ENCODE measurements at regions of chr2 and their contacts with region 1.

Region 1: DNA sequence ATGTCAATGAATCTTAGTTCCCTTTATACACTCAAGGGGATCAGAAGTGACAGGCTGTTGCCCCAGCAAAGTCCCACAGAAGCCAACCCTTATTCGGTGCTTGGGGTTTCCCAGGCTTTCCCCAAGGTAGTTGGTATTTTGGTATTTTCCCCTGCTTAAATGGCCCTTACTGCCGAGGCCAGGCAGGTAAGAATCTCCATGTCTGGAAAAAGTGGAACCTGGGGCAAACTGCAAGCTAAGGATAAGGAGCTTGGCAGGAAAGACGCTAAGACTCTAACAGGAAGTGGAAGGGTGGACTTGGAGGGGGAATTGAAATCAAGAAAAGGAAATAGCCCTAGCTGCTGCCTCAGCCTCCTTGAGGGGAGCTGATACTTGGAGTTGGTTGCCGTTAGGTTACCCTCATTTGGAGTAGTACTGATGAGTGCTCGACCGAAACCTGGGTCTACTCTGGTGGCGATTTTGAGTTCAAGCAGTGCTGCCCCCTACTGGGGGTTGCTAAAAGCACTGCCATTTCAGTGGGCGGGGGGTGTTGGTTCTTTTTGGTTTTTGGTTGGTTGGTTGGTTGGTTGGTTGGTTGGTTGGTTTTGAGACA is 3.3 kb upstream of the GPBAR1 start:
- DNase-seq: peak; percentile 64 to 73 (median 68)
- H3K4me3 ChIP-seq: no peak overlapping the region
- H3K4me3 Mint-ChIP-seq: peak overlapping the region in 7 of 8 donors; percentile 42 to 83 (median 72)
- H3K27ac ChIP-seq: peak overlapping the region; percentile 58
- H3K27ac Mint-ChIP-seq: peak overlapping the region; percentile 64 to 96 (median 88)
- H3K4me1 ChIP-seq: peaks cover 10% of the 10 kb centered on the region
- H3K4me1 Mint-ChIP-seq: peaks cover 7 to 18% (median 13%) of the 10 kb centered on the region in 4 donors
- H3K27me3 ChIP-seq: no peaks in the 10 kb centered on the region
- H3K27me3 Mint-ChIP-seq: no peaks in the 10 kb centered on the region

Region 2: GRCh38 chr2:217993817-217994463 is 263.5 kb before region 1 on chr2:
- CTCF ChIA-PET with region 1: no interaction called
- POLR2A ChIA-PET with region 1: no interaction called
- intact Hi-C with region 1: no loop called
- DNase-seq: peak in 4 of 5 donors; percentile 17 to 24 (median 18)
- H3K4me3 ChIP-seq: no peak overlapping the region
- H3K4me3 Mint-ChIP-seq: no peak overlapping the region
- H3K27ac ChIP-seq: no peak overlapping the region
- H3K27ac Mint-ChIP-seq: no peak overlapping the region
- H3K4me1 ChIP-seq: no peaks in the 10 kb centered on the region
- H3K4me1 Mint-ChIP-seq: peaks cover 0 to 1% (median 0%) of the 10 kb centered on the region in 4 donors
- H3K27me3 ChIP-seq: no peaks in the 10 kb centered on the region
- H3K27me3 Mint-ChIP-seq: peaks cover 4 to 17% of the 10 kb centered on the region in 2 donors

Region 3: DNA sequence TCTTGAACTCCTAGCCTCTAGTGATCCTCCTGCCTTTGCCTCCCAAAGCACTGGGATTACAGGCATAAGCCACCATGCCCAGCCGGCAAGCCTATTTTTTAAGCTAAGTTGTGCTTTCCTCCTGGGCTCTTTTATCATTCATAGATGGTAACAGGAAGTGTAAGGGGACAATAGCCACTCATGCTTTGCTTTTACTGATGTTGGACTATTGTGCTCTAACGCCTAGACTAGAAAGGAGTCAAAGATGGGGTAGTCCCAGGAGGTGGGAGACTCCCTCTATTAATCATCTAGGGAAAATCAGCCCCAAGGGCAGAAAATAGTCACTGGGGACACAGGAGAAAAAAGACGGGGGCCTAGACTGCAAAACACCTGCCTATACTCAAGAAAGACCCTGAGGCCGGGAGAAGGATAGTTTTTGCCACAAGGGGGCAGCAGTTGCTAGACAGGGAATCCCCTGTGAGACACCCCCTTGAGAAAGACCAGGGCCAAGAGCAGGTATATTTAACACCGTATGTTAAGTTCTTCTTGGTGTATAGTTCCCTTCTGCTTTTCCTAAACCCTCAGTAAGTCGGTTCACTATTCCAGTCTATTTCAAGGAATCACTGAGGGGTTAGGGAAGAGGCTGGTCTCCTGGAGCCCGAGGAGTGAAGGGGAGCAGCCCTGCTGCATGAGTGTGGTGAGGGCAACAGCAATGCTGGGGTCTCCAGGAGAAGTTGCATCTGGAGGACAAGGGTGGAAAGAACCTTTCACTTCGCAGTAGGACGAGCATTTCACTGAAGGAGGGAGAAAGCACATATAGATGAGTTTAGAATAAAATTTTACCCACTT is 88.6 kb before region 1 on chr2:
- CTCF ChIA-PET with region 1: interaction called, 4 read pairs
- POLR2A ChIA-PET with region 1: no interaction called
- intact Hi-C with region 1: loop called (anchors 1 kb)
- DNase-seq: peak; percentile 47 to 65 (median 52)
- H3K4me3 ChIP-seq: no peak overlapping the region
- H3K4me3 Mint-ChIP-seq: peak overlapping the region in 1 of 8 donors; percentile 26
- H3K27ac ChIP-seq: no peak overlapping the region
- H3K27ac Mint-ChIP-seq: peak overlapping the region in 4 of 7 donors; percentile 10 to 67 (median 38)
- H3K4me1 ChIP-seq: peaks cover 30% of the 10 kb centered on the region
- H3K4me1 Mint-ChIP-seq: peaks cover 19 to 41% (median 30%) of the 10 kb centered on the region in 4 donors
- H3K27me3 ChIP-seq: no peaks in the 10 kb centered on the region
- H3K27me3 Mint-ChIP-seq: peaks cover 2 to 6% of the 10 kb centered on the region in 2 donors

Region 4: GRCh38 chr2:218186355-218186766 is 71.1 kb before region 1 on chr2:
- CTCF ChIA-PET with region 1: interaction called, 157 read pairs
- POLR2A ChIA-PET with region 1: interaction called, 3 read pairs
- intact Hi-C with region 1: loop called (anchors 1 kb)
- DNase-seq: peak; percentile 68 to 79 (median 73)
- H3K4me3 ChIP-seq: no peak overlapping the region
- H3K4me3 Mint-ChIP-seq: peak overlapping the region in 1 of 8 donors; percentile 3
- H3K27ac ChIP-seq: no peak overlapping the region
- H3K27ac Mint-ChIP-seq: peak overlapping the region in 2 of 7 donors; percentile 24 to 44
- H3K4me1 ChIP-seq: peaks cover 8% of the 10 kb centered on the region
- H3K4me1 Mint-ChIP-seq: peaks cover 5 to 8% (median 7%) of the 10 kb centered on the region in 4 donors
- H3K27me3 ChIP-seq: no peaks in the 10 kb centered on the region
- H3K27me3 Mint-ChIP-seq: peaks cover 0 to 1% of the 10 kb centered on the region in 2 donors

Region 5: GRCh38 chr2:218216674-218217359 is 40.7 kb before region 1 on chr2 and contains the start of gene ARPC2:
- CTCF ChIA-PET with region 1: interaction called, 16 read pairs
- POLR2A ChIA-PET with region 1: interaction called, 21 read pairs
- intact Hi-C with region 1: loop called (anchors 1 kb)
- DNase-seq: peak; percentile 92 to 97 (median 96)
- H3K4me3 ChIP-seq: peak within 1 kb of the TSS; percentile 85 to 97
- H3K4me3 Mint-ChIP-seq: peak within 1 kb of the TSS; percentile 89 to 98 (median 96)
- H3K27ac ChIP-seq: peak within 1 kb of the TSS; percentile 93
- H3K27ac Mint-ChIP-seq: peak within 1 kb of the TSS; percentile 93 to 99 (median 97)
- H3K4me1 ChIP-seq: peaks cover 39% of the 10 kb centered on the region
- H3K4me1 Mint-ChIP-seq: peaks cover 28 to 52% (median 38%) of the 10 kb centered on the region in 4 donors
- H3K27me3 ChIP-seq: no peaks in the 10 kb centered on the region
- H3K27me3 Mint-ChIP-seq: no peaks in the 10 kb centered on the region
- total RNA-seq, gene ARPC2: 412 to 414 TPM

Region 6: GRCh38 chr2:218223046-218223445 is 34.4 kb before region 1 on chr2:
- CTCF ChIA-PET with region 1: interaction called, 13 read pairs
- POLR2A ChIA-PET with region 1: interaction called, 21 read pairs
- intact Hi-C with region 1: loop called (anchors 1 kb)
- DNase-seq: peak in 1 of 5 donors; percentile 63
- H3K4me3 ChIP-seq: peak overlapping the region in 1 of 2 donors; percentile 15
- H3K4me3 Mint-ChIP-seq: peak overlapping the region; percentile 72 to 95 (median 73)
- H3K27ac ChIP-seq: peak overlapping the region; percentile 93
- H3K27ac Mint-ChIP-seq: peak overlapping the region; percentile 77 to 95 (median 91)
- H3K4me1 ChIP-seq: peaks cover 90% of the 10 kb centered on the region
- H3K4me1 Mint-ChIP-seq: peaks cover 65 to 97% (median 81%) of the 10 kb centered on the region in 4 donors
- H3K27me3 ChIP-seq: no peaks in the 10 kb centered on the region
- H3K27me3 Mint-ChIP-seq: no peaks in the 10 kb centered on the region

Region 7: DNA sequence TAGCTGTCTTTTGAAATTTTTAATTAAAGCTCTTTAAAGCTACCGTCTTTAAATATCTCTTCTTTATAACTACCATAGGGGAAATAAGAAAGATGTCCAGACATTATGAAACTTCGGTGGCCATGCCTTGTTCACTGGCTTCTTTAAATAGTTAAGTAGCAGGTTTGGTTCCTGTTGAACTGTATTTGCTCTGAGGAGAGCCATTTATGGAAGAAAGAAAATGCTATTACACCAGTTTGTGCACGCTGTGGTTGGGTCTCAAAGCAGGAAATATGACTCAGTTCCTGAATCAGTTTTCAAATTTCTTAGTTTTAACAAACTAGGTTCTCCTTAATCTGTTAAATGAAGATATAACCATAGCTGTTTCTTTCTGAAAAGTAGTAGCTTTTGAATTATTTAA is 28.2 kb before region 1 on chr2:
- CTCF ChIA-PET with region 1: interaction called, 31 read pairs
- POLR2A ChIA-PET with region 1: interaction called, 9 read pairs
- intact Hi-C with region 1: no loop called
- DNase-seq: peak; percentile 46 to 75 (median 52)
- H3K4me3 ChIP-seq: no peak overlapping the region
- H3K4me3 Mint-ChIP-seq: peak overlapping the region; percentile 42 to 88 (median 70)
- H3K27ac ChIP-seq: peak overlapping the region; percentile 35
- H3K27ac Mint-ChIP-seq: peak overlapping the region; percentile 70 to 95 (median 90)
- H3K4me1 ChIP-seq: peaks cover 80% of the 10 kb centered on the region
- H3K4me1 Mint-ChIP-seq: peaks cover 50 to 86% (median 70%) of the 10 kb centered on the region in 4 donors
- H3K27me3 ChIP-seq: no peaks in the 10 kb centered on the region
- H3K27me3 Mint-ChIP-seq: no peaks in the 10 kb centered on the region

Region 8: GRCh38 chr2:218245214-218245613 is 12.3 kb before region 1 on chr2:
- CTCF ChIA-PET with region 1: interaction called, 61 read pairs
- POLR2A ChIA-PET with region 1: interaction called, 9 read pairs
- intact Hi-C with region 1: no loop called
- DNase-seq: no peak
- H3K4me3 ChIP-seq: no peak overlapping the region
- H3K4me3 Mint-ChIP-seq: no peak overlapping the region
- H3K27ac ChIP-seq: no peak overlapping the region
- H3K27ac Mint-ChIP-seq: peak overlapping the region in 3 of 7 donors; percentile 57 to 78 (median 69)
- H3K4me1 ChIP-seq: peaks cover 9% of the 10 kb centered on the region
- H3K4me1 Mint-ChIP-seq: peaks cover 11 to 24% (median 13%) of the 10 kb centered on the region in 4 donors
- H3K27me3 ChIP-seq: no peaks in the 10 kb centered on the region
- H3K27me3 Mint-ChIP-seq: no peaks in the 10 kb centered on the region